ENCODE measurements at regions of chr12 and their contacts with region 1.

Region 1: DNA sequence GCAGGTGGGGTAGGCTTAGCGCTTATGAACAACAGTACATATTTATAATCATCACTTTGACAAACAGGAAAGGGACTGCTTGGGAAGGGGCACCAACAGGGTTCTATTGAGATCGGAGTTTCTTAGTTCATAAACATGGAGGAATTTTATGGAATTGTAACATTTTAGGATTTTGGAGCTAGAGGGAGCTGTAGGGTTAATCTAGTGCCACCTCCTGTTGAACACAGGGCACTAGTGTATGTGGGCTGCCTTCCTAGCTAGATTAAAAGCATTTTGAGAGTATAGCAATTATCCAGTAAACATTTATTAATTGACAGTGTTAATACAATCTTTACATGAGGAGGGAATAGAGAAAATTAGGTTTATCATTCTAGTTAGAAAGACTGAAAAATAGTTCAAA is 23.1 kb upstream of the TBC1D30 start:
- DNase-seq: no peak
- ATAC-seq: no peak
- H3K4me3 ChIP-seq: no peak overlapping the region
- H3K4me3 Mint-ChIP-seq: no peak overlapping the region
- H3K27ac ChIP-seq: no peak overlapping the region
- H3K27ac Mint-ChIP-seq: no peak overlapping the region
- H3K4me1 ChIP-seq: no peaks in the 10 kb centered on the region
- H3K4me1 Mint-ChIP-seq: peaks cover 5% of the 10 kb centered on the region
- H3K27me3 ChIP-seq: peaks cover 0 to 3% of the 10 kb centered on the region in 2 experiments
- H3K27me3 Mint-ChIP-seq: peaks cover 30% of the 10 kb centered on the region
- CTCF ChIP-seq: no peak

Region 2: GRCh38 chr12:64544371-64545080 is 256.9 kb before region 1 on chr12:
- CTCF ChIA-PET with region 1: interaction called, 18 read pairs
- POLR2A ChIA-PET with region 1: no interaction called
- intact Hi-C with region 1: loop called in 1 of 2 experiments (anchors 5 kb)
- DNase-seq: no peak
- ATAC-seq: no peak
- H3K4me3 ChIP-seq: no peak overlapping the region
- H3K4me3 Mint-ChIP-seq: no peak overlapping the region
- H3K27ac ChIP-seq: no peak overlapping the region
- H3K27ac Mint-ChIP-seq: no peak overlapping the region
- H3K4me1 ChIP-seq: no peaks in the 10 kb centered on the region
- H3K4me1 Mint-ChIP-seq: peaks cover 2% of the 10 kb centered on the region
- H3K27me3 ChIP-seq: no peaks in the 10 kb centered on the region
- H3K27me3 Mint-ChIP-seq: peaks cover 3% of the 10 kb centered on the region
- CTCF ChIP-seq: no peak

Region 3: DNA sequence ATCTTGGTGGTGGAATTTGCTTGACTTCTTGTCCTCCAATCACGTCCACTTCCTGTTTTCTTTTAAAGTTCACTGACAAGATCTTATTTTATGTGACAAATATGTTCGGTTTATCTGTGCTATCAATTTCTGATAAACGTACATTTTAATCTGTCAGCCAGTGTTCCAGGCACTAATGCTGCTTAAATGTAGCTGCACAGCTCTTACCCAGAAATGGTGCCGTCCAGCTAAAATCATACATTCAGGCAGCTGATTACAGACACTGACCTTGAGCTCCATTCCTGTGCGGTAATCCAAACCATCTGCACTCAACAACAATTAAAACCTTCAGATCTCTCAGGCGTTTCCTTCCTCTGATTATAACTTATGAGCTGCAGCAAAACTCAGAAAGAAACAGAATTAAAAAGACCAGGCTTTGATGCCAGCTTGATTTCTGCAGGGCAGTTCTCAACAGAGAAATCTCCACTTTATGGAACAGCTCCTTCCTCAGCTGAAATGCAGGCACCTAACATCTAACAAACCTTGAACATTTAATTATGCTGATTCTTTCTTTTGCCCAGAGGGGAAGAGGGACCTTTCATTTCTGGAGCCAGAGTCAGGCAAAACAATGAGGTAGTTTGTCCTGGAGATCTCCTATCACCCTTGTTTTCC is 217.5 kb before region 1 on chr12:
- CTCF ChIA-PET with region 1: no interaction called
- POLR2A ChIA-PET with region 1: no interaction called
- intact Hi-C with region 1: no loop called
- DNase-seq: no peak
- ATAC-seq: no peak
- H3K4me3 ChIP-seq: peak overlapping the region in 1 of 2 experiments; percentile 31
- H3K4me3 Mint-ChIP-seq: peak overlapping the region; percentile 60
- H3K27ac ChIP-seq: no peak overlapping the region
- H3K27ac Mint-ChIP-seq: peak overlapping the region; percentile 52
- H3K4me1 ChIP-seq: peaks cover 23% of the 10 kb centered on the region
- H3K4me1 Mint-ChIP-seq: peaks cover 31% of the 10 kb centered on the region
- H3K27me3 ChIP-seq: no peaks in the 10 kb centered on the region
- H3K27me3 Mint-ChIP-seq: no peaks in the 10 kb centered on the region
- CTCF ChIP-seq: no peak

Region 4: GRCh38 chr12:64837427-64837826 is 36.0 kb after region 1 on chr12:
- CTCF ChIA-PET with region 1: no interaction called
- POLR2A ChIA-PET with region 1: no interaction called
- intact Hi-C with region 1: no loop called
- DNase-seq: no peak
- ATAC-seq: no peak
- H3K4me3 ChIP-seq: no peak overlapping the region
- H3K4me3 Mint-ChIP-seq: no peak overlapping the region
- H3K27ac ChIP-seq: no peak overlapping the region
- H3K27ac Mint-ChIP-seq: no peak overlapping the region
- H3K4me1 ChIP-seq: no peaks in the 10 kb centered on the region
- H3K4me1 Mint-ChIP-seq: no peaks in the 10 kb centered on the region
- H3K27me3 ChIP-seq: no peaks in the 10 kb centered on the region
- H3K27me3 Mint-ChIP-seq: peaks cover 6% of the 10 kb centered on the region
- CTCF ChIP-seq: no peak

Region 5: DNA sequence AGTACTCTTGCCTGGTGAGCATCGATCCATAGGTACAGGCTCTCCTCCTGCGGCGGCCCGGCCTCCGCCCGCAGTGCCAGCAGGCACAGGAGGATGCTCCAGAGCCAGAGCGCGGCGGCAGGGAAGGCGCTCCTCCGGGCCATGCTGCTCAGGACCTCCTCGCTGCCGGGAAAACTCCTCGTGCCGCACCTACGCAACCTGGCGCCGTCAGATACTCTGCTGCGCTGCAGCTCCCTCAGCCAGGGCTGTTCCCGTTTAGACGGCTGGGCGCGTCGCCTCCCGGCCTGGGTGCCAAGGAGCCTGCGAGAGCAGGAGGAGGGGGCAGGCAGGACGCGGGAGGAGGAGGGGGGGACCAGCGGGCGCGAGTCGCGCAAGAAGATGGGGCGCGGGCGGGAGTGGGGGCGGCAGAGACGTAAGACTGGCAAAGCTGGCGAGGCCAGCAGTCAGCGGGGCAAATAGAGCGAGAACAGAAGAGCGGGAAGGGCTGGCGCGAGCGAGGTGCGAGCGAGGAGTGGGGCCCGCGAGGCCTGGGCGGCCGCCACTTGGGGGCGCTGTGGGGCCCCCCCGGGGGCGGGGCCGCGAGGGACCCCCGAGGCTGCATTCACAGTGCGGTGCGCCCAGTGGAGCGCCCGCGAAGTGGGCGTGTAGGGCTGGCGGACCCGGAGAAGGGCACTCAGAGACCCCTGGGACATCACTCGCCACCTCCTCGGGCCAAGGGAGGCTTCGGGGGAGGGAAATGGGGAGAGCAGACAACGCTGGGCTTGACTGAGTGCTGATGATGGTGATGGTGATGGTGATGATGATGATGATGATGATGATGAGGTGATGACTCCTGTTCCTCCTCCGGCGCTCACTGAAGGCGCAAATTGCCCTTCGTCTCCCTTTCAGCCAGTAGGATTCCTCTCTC is 319.9 kb after region 1 on chr12 and contains the start of gene WIF1:
- CTCF ChIA-PET with region 1: interaction called, 3 read pairs
- POLR2A ChIA-PET with region 1: no interaction called
- intact Hi-C with region 1: loop called in 1 of 2 experiments (anchors 10 kb)
- DNase-seq: peak in 3 of 9 experiments; percentile 12 to 33 (median 26)
- ATAC-seq: peak; percentile 62
- H3K4me3 ChIP-seq: peak within 1 kb of the TSS; percentile 9 to 49
- H3K4me3 Mint-ChIP-seq: peak within 1 kb of the TSS; percentile 51
- H3K27ac ChIP-seq: no peak within 1 kb of the TSS
- H3K27ac Mint-ChIP-seq: no peak within 1 kb of the TSS
- H3K4me1 ChIP-seq: peaks cover 6% of the 10 kb centered on the region
- H3K4me1 Mint-ChIP-seq: peaks cover 11% of the 10 kb centered on the region
- H3K27me3 ChIP-seq: peaks cover 15 to 21% of the 10 kb centered on the region in 2 experiments
- H3K27me3 Mint-ChIP-seq: peaks cover 50% of the 10 kb centered on the region
- CTCF ChIP-seq: peak; percentile 27
- total RNA-seq, gene WIF1: not detected

Region 6: GRCh38 chr12:66087365-66087943 is 1286.1 kb after region 1 on chr12:
- CTCF ChIA-PET with region 1: no interaction called
- POLR2A ChIA-PET with region 1: no interaction called
- intact Hi-C with region 1: loop called in 1 of 2 experiments (anchors 10 kb)
- DNase-seq: peak; percentile 14 to 63 (median 46)
- ATAC-seq: no peak
- H3K4me3 ChIP-seq: no peak overlapping the region
- H3K4me3 Mint-ChIP-seq: no peak overlapping the region
- H3K27ac ChIP-seq: no peak overlapping the region
- H3K27ac Mint-ChIP-seq: no peak overlapping the region
- H3K4me1 ChIP-seq: no peaks in the 10 kb centered on the region
- H3K4me1 Mint-ChIP-seq: no peaks in the 10 kb centered on the region
- H3K27me3 ChIP-seq: no peaks in the 10 kb centered on the region
- H3K27me3 Mint-ChIP-seq: peaks cover 29% of the 10 kb centered on the region
- CTCF ChIP-seq: peak; percentile 53